ENCODE measurements at regions of chr2 and their contacts with region 1.

Region 1: DNA sequence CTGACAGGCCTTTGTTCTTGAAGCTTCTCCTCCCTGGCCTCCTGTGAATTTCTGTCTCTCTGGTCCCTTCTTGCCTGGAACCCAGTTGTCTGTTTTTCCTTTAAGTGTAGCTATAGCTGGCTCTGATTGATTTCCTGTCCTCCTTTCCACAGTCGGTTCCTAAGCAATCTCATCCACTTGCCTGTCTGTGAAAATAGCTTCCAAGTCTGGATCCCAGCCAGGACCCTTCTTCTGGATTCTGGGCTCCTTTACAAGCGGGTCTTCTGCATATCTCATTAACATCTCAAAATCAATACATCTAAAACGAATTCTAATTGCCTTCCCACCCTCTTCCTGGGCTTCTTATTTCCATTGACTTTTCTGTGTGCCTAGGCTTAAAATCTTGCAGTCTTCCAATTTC is 124.9 kb downstream of the DAW1 start:
- DNase-seq: no peak
- ATAC-seq: no peak
- H3K4me3 ChIP-seq: no peak overlapping the region
- H3K27ac ChIP-seq: no peak overlapping the region
- H3K4me1 ChIP-seq: peaks cover 0 to 13% (median 0%) of the 10 kb centered on the region in 9 donors
- H3K27me3 ChIP-seq: no peaks in the 10 kb centered on the region
- CTCF ChIP-seq: no peak

Region 2: DNA sequence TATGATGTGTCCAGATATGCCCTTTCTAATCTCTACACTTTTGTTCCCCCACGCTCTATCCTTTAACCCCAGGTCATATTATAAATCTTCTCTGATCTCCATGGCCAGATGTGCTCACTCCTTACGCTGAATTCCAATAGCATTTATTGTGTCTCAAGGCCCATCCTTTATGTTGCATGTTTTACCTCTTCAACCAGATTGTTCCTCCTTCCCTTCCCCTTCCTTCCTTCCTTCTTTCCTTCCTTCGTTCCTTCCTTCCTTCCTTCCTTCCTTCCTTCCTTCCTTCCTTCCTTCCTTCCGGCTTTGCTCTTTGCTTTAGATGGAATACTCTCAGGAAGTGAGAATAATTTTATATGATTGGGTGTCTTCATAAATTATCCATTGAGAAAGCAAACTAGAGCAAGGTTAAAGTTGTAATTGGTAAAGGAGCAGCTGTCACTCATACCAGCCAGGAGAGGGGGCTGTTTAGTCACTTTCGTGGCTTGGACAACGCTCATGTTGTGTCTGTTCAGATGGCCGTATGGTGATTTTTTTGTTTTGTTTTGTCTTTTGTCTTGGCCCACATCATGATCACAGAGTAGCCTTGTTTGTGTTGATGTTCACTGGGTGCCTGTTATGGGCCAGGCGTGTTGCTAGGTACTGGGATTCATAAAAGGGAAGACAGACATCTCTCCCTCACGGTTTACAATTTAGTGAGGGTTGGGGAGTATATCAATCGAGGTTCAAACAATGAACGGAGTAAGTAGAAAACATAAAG is 56.9 kb before region 1 on chr2:
- intact Hi-C with region 1: no loop called
- DNase-seq: no peak
- ATAC-seq: peak in 5 of 8 donors; percentile 38 to 59 (median 56)
- H3K4me3 ChIP-seq: no peak overlapping the region
- H3K27ac ChIP-seq: no peak overlapping the region
- H3K4me1 ChIP-seq: no peaks in the 10 kb centered on the region
- H3K27me3 ChIP-seq: peaks cover 0 to 7% (median 0%) of the 10 kb centered on the region in 7 donors
- CTCF ChIP-seq: peak; percentile 13 to 57 (median 43)

Region 3: GRCh38 chr2:228037915-228038314 is 41.5 kb after region 1 on chr2:
- intact Hi-C with region 1: no loop called
- DNase-seq: no peak
- ATAC-seq: no peak
- H3K4me3 ChIP-seq: no peak overlapping the region
- H3K27ac ChIP-seq: no peak overlapping the region
- H3K4me1 ChIP-seq: no peaks in the 10 kb centered on the region
- H3K27me3 ChIP-seq: no peaks in the 10 kb centered on the region
- CTCF ChIP-seq: no peak

Region 4: DNA sequence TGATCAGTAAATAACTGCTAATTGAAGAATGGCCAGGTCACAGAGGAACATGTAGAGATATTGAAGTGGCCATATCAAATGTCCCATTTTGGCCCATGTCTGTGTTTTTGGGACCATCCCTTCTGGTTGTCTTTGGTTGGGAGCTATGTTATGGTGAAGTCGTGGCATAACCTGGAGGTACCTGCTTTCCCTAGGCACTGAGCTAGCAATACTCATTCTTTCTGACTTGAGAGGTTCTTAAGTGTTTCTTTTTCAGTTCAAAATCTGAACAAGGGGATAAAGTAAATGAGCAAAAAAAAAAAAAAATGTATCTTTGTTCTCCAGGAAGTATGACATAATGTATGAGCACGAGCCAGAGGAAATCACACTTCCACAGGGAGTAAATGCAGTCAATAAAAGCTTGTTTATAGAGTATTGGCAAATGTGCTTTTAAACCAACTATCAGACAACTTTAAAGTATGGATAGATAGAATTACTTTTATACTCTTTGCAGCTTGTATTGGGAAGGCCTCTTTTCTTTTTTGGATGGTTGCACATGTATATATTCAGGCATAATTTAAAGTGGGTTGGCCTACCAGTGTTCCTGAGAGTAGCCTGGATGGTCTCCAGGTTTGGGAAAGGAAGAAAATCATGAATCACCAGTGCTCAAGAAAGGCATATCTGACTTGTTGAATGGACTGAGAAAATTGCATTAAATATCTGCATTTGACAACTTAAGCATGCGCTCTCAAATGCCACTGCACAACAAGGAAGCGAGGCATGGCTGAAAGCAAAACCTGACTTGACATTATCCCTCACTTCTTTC is 60.1 kb after region 1 on chr2:
- intact Hi-C with region 1: loop called in 1 of 10 experiments (anchors 2 kb)
- DNase-seq: no peak
- ATAC-seq: peak in 1 of 8 donors; percentile 33
- H3K4me3 ChIP-seq: no peak overlapping the region
- H3K27ac ChIP-seq: no peak overlapping the region
- H3K4me1 ChIP-seq: peaks cover 0 to 25% (median 5%) of the 10 kb centered on the region in 9 donors
- H3K27me3 ChIP-seq: no peaks in the 10 kb centered on the region
- CTCF ChIP-seq: no peak

Measured in heart right ventricle (tissue), 16 donors.